Panc1 (cell line): ENCODE measurements at regions of chr2 and their contacts with region 1.

Region 1: DNA sequence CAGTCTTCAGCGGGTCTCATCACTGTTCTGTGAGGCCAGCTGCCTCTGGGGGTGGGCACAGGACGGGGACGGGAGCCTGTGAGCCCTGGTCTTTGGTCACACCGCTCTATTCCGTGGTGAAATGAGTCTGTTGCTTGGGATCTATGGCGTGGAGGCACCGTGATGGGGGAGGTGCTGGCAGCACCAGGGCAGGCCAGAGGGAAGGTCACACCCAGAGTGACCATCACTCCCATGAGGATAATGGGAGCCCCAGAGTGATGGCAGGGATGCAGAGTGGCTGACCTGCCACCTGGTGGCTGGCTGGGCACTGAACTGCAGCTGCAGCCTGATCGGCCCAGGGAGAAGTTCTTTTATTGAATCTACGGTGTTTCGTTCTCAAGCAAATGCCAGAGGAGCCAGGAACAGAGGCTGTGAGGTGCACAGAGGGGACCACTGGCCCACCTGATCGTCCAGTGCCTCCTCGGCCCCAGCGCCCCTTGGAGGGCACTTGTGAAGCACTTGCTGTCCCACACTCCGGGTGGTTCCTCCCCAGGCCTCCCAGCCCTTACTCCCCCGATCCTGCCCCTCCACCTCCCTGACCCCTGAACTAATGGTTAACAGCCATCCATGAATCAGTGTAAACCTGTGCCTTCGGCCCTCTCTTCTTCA is 17.9 kb downstream of the KCNIP3 start:
- DNase-seq: no peak
- ATAC-seq: peak; percentile 89
- H3K4me3 ChIP-seq: no peak overlapping the region
- H3K27ac ChIP-seq: no peak overlapping the region
- H3K4me1 ChIP-seq: 0 out of 2 replicates have a peak, but pooled peaks cover 3% of the 10 kb centered on the region
- H3K27me3 ChIP-seq: no peaks in the 10 kb centered on the region
- CTCF ChIP-seq: peak; percentile 91

Region 2: DNA sequence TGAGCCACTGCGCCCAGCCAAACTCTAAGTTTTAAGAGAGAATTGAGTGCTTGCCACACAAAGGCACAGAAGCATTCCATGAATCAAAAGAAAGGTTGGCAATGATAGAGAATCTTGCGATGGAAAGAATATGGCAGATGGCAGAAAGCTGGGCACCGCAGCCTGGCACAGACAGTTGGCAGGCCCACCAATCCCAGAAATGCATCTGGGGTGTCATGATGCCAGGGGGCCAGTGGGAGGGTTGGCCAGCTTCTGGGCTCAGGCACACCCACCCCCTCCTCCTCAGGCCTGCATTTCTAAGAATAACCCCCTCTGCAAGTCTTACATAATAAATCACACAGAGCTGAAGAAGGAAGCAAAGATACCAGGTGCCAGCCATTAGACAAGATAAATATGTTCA is 129.9 kb before region 1 on chr2:
- CTCF ChIA-PET with region 1: no interaction called
- POLR2A ChIA-PET with region 1: no interaction called
- in situ Hi-C with region 1: no loop called
- intact Hi-C with region 1: loop called (anchors 5 kb)
- DNase-seq: no peak
- ATAC-seq: no peak
- H3K4me3 ChIP-seq: no peak overlapping the region
- H3K27ac ChIP-seq: no peak overlapping the region
- H3K4me1 ChIP-seq: no peaks in the 10 kb centered on the region
- H3K27me3 ChIP-seq: peaks cover 2% of the 10 kb centered on the region; the same call in 1 of the 2 replicates
- CTCF ChIP-seq: no peak

Region 3: GRCh38 chr2:95231723-95232122 is 83.4 kb before region 1 on chr2:
- CTCF ChIA-PET with region 1: interaction called, 9 read pairs
- POLR2A ChIA-PET with region 1: no interaction called
- in situ Hi-C with region 1: no loop called
- intact Hi-C with region 1: loop called (anchors 1 kb)
- DNase-seq: peak; percentile 45
- ATAC-seq: peak; percentile 71
- H3K4me3 ChIP-seq: no peak overlapping the region
- H3K27ac ChIP-seq: no peak overlapping the region
- H3K4me1 ChIP-seq: no peaks in the 10 kb centered on the region
- H3K27me3 ChIP-seq: no peaks in the 10 kb centered on the region
- CTCF ChIP-seq: peak; percentile 93

Region 4: DNA sequence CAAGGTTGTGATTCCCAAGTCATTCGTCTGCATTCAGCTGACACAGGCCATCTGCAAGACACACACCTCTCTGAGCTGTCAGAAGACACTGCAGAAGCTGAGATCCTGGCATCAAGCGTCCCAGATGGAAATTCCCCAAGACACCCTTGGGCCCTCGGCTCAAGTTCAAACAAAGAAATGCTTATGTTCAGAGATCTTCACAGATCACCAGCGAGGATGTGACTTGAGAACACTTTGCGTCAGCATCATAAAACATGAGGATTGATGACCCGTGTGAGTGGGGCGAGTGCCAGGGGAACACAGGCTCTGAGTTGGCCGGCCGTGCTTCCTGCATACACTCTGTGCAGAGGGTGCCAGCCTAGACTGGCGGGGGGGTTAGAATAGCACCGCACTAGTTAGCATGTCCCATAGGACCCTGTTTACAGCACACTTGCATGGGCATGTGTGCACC is 18.8 kb after region 1 on chr2:
- CTCF ChIA-PET with region 1: no interaction called
- POLR2A ChIA-PET with region 1: no interaction called
- in situ Hi-C with region 1: no loop called
- intact Hi-C with region 1: no loop called
- DNase-seq: peak; percentile 67
- ATAC-seq: peak; percentile 89
- H3K4me3 ChIP-seq: no peak overlapping the region; a peak in 1 of 4 replicates
- H3K27ac ChIP-seq: peak overlapping the region; percentile 82
- H3K4me1 ChIP-seq: peaks cover 36% of the 10 kb centered on the region
- H3K27me3 ChIP-seq: no peaks in the 10 kb centered on the region
- CTCF ChIP-seq: no peak